IMR-90 (cell line): ENCODE measurements at regions of chr10 and their contacts with region 1.

Region 1: DNA sequence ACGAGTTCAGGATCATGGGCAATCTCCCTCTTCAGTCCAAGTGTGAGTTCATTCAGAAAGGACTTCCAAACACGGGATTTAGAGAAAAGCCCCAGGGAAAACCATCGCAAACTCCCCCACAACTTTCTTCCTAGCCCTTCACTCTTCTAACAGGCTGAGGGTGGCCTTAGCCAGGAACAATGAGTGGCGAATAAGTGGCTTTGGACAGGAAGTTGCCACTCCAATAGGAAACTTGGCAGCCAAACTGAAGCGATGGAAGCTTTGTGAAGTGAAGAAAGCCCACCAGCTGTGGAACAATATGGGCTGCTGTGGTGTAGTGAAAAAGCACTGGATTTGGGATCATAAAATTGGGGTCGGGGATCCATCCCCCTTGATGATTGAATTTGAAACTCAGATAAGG is 193.2 kb downstream of the TEX36 start:
- DNase-seq: no peak
- ATAC-seq: no peak
- H3K4me3 ChIP-seq: no peak overlapping the region
- H3K27ac ChIP-seq: no peak overlapping the region
- H3K4me1 ChIP-seq: no peaks in the 10 kb centered on the region
- H3K27me3 ChIP-seq: no peaks in the 10 kb centered on the region; the same call in none of the 2 replicates
- CTCF ChIP-seq: no peak
- POLR2A ChIP-seq: no peak
- RAD21 ChIP-seq: no peak

Region 2: GRCh38 chr10:125514206-125515186 is 24.8 kb after region 1 on chr10:
- CTCF ChIA-PET with region 1: no interaction called
- POLR2A ChIA-PET with region 1: no interaction called
- dilution Hi-C with region 1: no loop called
- in situ Hi-C with region 1: no loop called
- intact Hi-C with region 1: no loop called
- DNase-seq: no peak
- ATAC-seq: no peak
- H3K4me3 ChIP-seq: no peak overlapping the region
- H3K27ac ChIP-seq: no peak overlapping the region
- H3K4me1 ChIP-seq: no peaks in the 10 kb centered on the region
- H3K27me3 ChIP-seq: no peaks in the 10 kb centered on the region; the same call in 1 of the 2 replicates
- CTCF ChIP-seq: no peak
- POLR2A ChIP-seq: no peak
- RAD21 ChIP-seq: no peak

Region 3: DNA sequence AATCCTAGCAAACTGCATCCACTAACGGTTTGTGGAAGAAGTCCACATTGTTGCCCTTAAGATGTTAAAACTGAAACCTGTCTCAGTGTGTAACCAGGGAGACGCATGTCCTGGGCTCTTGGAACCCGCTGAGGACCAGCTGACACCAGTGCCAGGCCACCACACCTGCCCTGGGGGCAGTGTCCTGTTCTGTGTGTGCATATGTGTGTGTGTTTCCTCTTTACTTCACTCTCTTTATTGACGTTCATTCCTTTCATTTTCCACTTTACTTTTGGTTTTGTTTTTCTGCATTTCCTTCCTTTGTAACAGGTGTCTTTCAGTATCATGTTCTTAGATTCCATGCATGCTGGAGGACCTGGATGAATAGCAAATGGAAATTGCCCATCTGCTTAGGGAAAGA is 109.5 kb after region 1 on chr10:
- CTCF ChIA-PET with region 1: no interaction called
- POLR2A ChIA-PET with region 1: no interaction called
- dilution Hi-C with region 1: no loop called
- in situ Hi-C with region 1: no loop called
- intact Hi-C with region 1: no loop called
- DNase-seq: no peak
- ATAC-seq: no peak
- H3K4me3 ChIP-seq: no peak overlapping the region
- H3K27ac ChIP-seq: no peak overlapping the region
- H3K4me1 ChIP-seq: no peaks in the 10 kb centered on the region
- H3K27me3 ChIP-seq: no peaks in the 10 kb centered on the region
- CTCF ChIP-seq: no peak
- POLR2A ChIP-seq: no peak
- RAD21 ChIP-seq: no peak

Region 4: GRCh38 chr10:125656523-125656922 is 166.8 kb after region 1 on chr10:
- CTCF ChIA-PET with region 1: no interaction called
- POLR2A ChIA-PET with region 1: no interaction called
- dilution Hi-C with region 1: no loop called
- in situ Hi-C with region 1: no loop called
- intact Hi-C with region 1: loop called (anchors 10 kb)
- DNase-seq: no peak
- ATAC-seq: no peak
- H3K4me3 ChIP-seq: no peak overlapping the region
- H3K27ac ChIP-seq: no peak overlapping the region
- H3K4me1 ChIP-seq: no peaks in the 10 kb centered on the region
- H3K27me3 ChIP-seq: no peaks in the 10 kb centered on the region
- CTCF ChIP-seq: no peak
- POLR2A ChIP-seq: no peak
- RAD21 ChIP-seq: no peak